ENCODE measurements at regions of chr2 and their contacts with region 1.

Region 1: GRCh38 chr2:209556354-209556961 is 132.6 kb downstream of the MAP2 start:
- DNase-seq: no peak
- ATAC-seq: peak; percentile 78

Region 2: DNA sequence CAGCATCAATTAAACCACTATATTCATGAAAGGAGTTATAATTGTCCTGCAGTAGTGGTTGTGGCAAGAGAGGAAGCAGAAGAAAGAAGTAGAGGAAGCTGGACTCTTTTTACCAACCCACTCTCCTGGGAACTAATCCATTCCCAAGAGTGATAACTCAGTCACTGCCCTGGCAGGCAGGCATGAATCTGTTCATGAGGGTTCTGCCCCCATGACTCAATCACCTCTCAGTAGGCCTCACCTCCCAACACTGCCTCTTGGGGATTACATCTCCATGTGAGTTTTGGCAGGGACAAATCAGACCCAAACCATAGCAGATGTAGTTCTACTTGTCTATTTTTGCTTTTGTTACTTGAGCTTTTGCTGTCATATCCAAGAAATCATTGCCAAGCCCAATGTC is 365.3 kb before region 1 on chr2:
- intact Hi-C with region 1: no loop called
- DNase-seq: no peak
- ATAC-seq: no peak

Region 3: DNA sequence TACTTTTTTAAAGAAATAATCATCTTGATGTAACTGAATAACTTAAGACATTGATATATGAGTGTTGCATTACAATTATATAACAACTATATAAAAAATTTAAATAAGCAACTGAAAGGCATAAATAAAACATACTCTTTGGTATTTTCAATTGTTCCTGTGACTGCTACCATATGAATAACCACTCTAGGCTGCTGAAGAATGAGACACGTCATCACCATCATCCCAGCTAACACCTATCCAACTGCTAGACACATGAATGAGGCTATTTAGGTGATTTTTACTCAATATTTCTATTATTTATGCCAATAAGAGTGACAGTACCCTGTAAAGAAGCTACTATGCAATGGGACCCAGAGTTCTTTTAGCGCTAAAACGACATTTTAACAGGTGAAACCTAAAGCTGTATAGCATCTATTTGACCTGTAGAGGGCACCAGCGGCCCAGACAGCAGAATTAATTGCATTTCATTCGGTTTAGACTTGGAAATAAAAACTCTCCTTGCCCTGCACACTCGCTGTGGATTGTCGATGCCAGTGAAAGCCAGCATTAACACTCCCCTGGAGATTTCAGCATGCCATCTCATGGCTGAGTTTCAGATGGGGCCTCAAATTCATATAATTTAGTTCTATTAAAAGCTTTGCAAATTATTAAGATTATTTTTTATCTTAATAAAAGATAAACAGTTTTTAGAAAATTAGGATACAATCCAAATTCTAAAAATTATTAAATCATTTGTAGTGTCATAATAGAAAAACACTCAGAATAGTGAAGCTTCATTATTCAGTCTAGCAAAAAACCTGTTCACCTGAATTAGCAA is 222.1 kb before region 1 on chr2:
- intact Hi-C with region 1: loop called (anchors 5 kb)
- DNase-seq: peak; percentile 46
- ATAC-seq: peak; percentile 47

Region 4: DNA sequence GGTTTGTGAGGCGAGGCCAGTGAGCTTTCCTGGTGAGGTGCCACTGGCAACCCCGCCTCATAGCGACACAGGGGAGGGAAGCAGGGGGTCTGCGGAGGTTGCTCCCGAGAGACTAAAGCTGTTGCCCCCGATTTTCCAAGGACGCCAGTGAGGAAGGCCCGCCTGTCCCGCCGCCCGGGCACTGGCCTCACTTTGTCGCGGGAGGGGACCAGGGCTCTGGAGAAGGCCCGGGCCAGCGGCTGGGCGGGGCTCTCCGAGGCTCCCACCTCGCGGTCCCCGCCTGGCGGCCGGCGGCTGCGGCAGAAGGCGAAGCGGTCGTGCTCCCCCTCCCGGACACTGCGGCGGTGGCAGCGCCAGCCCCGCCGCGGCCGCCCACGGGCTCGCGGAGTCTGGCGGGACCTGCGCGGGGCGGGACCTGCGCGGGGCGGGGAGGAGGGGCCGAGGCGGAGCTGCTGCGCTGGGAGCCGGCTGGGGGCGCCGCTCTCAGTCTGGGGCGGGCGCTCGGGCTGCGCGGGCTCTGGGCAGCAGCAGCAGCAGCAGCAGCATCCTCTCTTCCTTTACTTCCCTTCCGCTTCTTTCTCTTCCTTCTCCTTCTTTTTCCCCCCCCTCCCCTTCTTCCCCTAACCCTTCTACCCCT is 132.8 kb before region 1 on chr2 and contains the start of gene MAP2:
- intact Hi-C with region 1: loop called (anchors 2 kb)
- DNase-seq: peak; percentile 90
- ATAC-seq: peak; percentile 100
- total RNA-seq, gene MAP2: 3.4 TPM

Region 5: GRCh38 chr2:209682646-209683045 is 126.2 kb after region 1 on chr2:
- intact Hi-C with region 1: no loop called
- DNase-seq: no peak
- ATAC-seq: no peak